ENCODE measurements at regions of chr13 and their contacts with region 1.

Region 1: GRCh38 chr13:93762708-93763426 is 536.3 kb downstream of the GPC6 start:
- DNase-seq: no peak
- H3K4me3 ChIP-seq: no peak overlapping the region
- H3K27ac ChIP-seq: no peak overlapping the region
- H3K4me1 ChIP-seq: no peaks in the 10 kb centered on the region
- H3K27me3 ChIP-seq: no peaks in the 10 kb centered on the region
- CTCF ChIP-seq: no peak

Region 2: GRCh38 chr13:93789058-93789457 is 26.2 kb after region 1 on chr13:
- CTCF ChIA-PET with region 1: no interaction called
- POLR2A ChIA-PET with region 1: no interaction called
- intact Hi-C with region 1: loop called (anchors 1 kb)
- DNase-seq: no peak
- H3K4me3 ChIP-seq: no peak overlapping the region
- H3K27ac ChIP-seq: no peak overlapping the region
- H3K4me1 ChIP-seq: no peaks in the 10 kb centered on the region
- H3K27me3 ChIP-seq: no peaks in the 10 kb centered on the region
- CTCF ChIP-seq: no peak

Measured in PC-9 (cell line).